Naive thymus-derived CD4-positive, alpha-beta T cell (primary cell): ENCODE measurements at regions of chr2 and their contacts with region 1.

Region 1: GRCh38 chr2:102442967-102443828 is 20.2 kb downstream of the IL18RAP start:
- DNase-seq: peak in 7 of 9 donors; percentile 16 to 58 (median 49)
- ATAC-seq: peak; percentile 89
- H3K4me3 ChIP-seq: no peak overlapping the region
- H3K4me3 Mint-ChIP-seq: peak overlapping the region in 6 of 10 donors; percentile 24 to 71 (median 36)
- H3K27ac ChIP-seq: no peak overlapping the region
- H3K27ac Mint-ChIP-seq: peak overlapping the region in 4 of 9 donors; percentile 19 to 46 (median 30)
- H3K4me1 ChIP-seq: peaks cover 0 to 5% of the 10 kb centered on the region in 2 donors
- H3K4me1 Mint-ChIP-seq: peaks cover 0 to 12% (median 7%) of the 10 kb centered on the region in 7 donors
- H3K27me3 ChIP-seq: no peaks in the 10 kb centered on the region
- H3K27me3 Mint-ChIP-seq: no peaks in the 10 kb centered on the region

Region 2: GRCh38 chr2:101341901-101342624 is 1101.1 kb before region 1 on chr2:
- CTCF ChIA-PET with region 1: no interaction called
- POLR2A ChIA-PET with region 1: no interaction called
- intact Hi-C with region 1: loop called in 1 of 2 experiments (anchors 10 kb)
- DNase-seq: peak; percentile 32 to 73 (median 51)
- ATAC-seq: peak; percentile 76
- H3K4me3 ChIP-seq: no peak overlapping the region
- H3K4me3 Mint-ChIP-seq: peak overlapping the region in 4 of 10 donors; percentile 10 to 63 (median 18)
- H3K27ac ChIP-seq: no peak overlapping the region
- H3K27ac Mint-ChIP-seq: peak overlapping the region in 5 of 9 donors; percentile 9 to 68 (median 31)
- H3K4me1 ChIP-seq: peaks cover 6 to 21% of the 10 kb centered on the region in 2 donors
- H3K4me1 Mint-ChIP-seq: peaks cover 24 to 43% (median 32%) of the 10 kb centered on the region in 7 donors
- H3K27me3 ChIP-seq: no peaks in the 10 kb centered on the region
- H3K27me3 Mint-ChIP-seq: peaks cover 0 to 20% (median 0%) of the 10 kb centered on the region in 5 donors

Region 3: DNA sequence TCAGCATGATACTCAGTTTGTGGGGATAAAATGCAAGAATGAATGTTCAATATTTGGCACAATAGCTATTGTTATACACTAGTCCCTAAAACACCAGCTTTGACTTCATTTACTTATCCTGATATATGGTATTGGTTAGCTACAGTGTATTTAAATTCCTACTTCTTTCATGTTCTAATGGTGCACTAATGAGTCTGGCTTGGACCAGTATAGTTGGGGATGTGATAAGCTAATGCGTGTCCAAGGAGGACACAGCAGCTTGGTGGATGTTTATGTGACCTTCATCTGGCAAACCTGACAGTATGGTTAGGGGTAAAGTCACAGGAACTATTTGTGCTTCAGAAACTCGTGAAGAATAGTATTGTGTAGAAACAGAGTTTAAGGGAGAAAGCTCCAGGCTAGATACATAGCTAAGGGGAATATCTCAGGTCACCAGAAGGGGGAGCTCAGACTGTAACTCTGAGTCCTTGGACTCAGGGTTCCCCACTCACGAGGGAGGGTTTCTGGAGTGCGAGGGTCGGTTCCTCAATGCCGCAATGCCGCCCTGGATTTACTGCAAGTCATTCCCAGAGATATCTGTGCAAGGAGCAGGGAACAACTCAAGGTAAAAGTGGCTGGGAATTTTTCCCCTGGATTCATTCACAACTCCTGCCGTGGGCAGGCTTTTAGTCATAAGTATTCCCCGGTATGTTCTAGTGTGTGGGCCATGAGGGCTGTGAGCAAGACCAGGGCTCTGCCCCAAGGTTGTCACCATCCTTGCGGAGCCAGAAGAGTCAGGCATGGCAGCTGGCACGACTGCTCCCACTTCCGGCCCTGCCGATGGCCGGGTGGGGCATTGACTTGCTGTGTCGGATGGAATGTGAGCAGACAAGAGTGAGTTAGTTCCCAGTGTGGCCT is 437.0 kb before region 1 on chr2:
- CTCF ChIA-PET with region 1: interaction called, 3 read pairs
- POLR2A ChIA-PET with region 1: interaction called, 3 read pairs
- intact Hi-C with region 1: loop called in 1 of 2 experiments (anchors 1 kb)
- DNase-seq: peak in 3 of 9 donors; percentile 23 to 28 (median 24)
- ATAC-seq: peak; percentile 71
- H3K4me3 ChIP-seq: no peak overlapping the region
- H3K4me3 Mint-ChIP-seq: no peak overlapping the region
- H3K27ac ChIP-seq: no peak overlapping the region
- H3K27ac Mint-ChIP-seq: no peak overlapping the region
- H3K4me1 ChIP-seq: peaks cover 0 to 12% of the 10 kb centered on the region in 2 donors
- H3K4me1 Mint-ChIP-seq: peaks cover 0 to 9% (median 0%) of the 10 kb centered on the region in 7 donors
- H3K27me3 ChIP-seq: no peaks in the 10 kb centered on the region
- H3K27me3 Mint-ChIP-seq: peaks cover 0 to 16% (median 10%) of the 10 kb centered on the region in 5 donors

Region 4: DNA sequence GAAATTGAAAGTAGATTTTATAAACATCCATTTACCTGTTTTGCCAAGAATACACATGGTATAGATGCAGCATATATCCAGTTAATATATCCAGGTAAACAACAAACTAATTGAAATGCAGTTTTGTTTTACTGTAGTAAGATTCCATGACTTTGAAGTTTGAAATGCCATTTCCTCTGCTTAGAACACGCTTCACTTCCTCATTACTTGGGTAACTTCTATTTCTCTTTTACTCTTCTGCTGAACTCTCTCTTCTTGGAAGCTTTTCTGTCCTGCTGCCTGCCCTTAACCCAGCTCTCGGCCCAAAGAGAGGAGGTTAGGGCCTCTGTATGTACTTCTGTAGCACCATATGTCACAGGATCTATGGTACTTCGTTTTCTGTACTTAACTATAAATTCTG is 270.5 kb before region 1 on chr2:
- CTCF ChIA-PET with region 1: no interaction called
- POLR2A ChIA-PET with region 1: no interaction called
- intact Hi-C with region 1: no loop called
- DNase-seq: peak in 1 of 9 donors; percentile 1
- ATAC-seq: peak; percentile 27
- H3K4me3 ChIP-seq: no peak overlapping the region
- H3K4me3 Mint-ChIP-seq: peak overlapping the region in 5 of 10 donors; percentile 1 to 53 (median 39)
- H3K27ac ChIP-seq: no peak overlapping the region
- H3K27ac Mint-ChIP-seq: peak overlapping the region in 5 of 9 donors; percentile 2 to 77 (median 42)
- H3K4me1 ChIP-seq: no peaks in the 10 kb centered on the region
- H3K4me1 Mint-ChIP-seq: peaks cover 4 to 11% (median 10%) of the 10 kb centered on the region in 7 donors
- H3K27me3 ChIP-seq: no peaks in the 10 kb centered on the region
- H3K27me3 Mint-ChIP-seq: peaks cover 0 to 5% (median 1%) of the 10 kb centered on the region in 5 donors

Region 5: GRCh38 chr2:102240640-102241370 is 202.4 kb before region 1 on chr2:
- CTCF ChIA-PET with region 1: interaction called, 32 read pairs
- POLR2A ChIA-PET with region 1: no interaction called
- intact Hi-C with region 1: loop called (anchors 1 kb)
- DNase-seq: peak; percentile 55 to 88 (median 80)
- ATAC-seq: peak; percentile 95
- H3K4me3 ChIP-seq: no peak overlapping the region
- H3K4me3 Mint-ChIP-seq: peak overlapping the region in 5 of 10 donors; percentile 12 to 41 (median 18)
- H3K27ac ChIP-seq: no peak overlapping the region
- H3K27ac Mint-ChIP-seq: peak overlapping the region in 5 of 9 donors; percentile 25 to 72 (median 56)
- H3K4me1 ChIP-seq: peaks cover 7 to 10% of the 10 kb centered on the region in 2 donors
- H3K4me1 Mint-ChIP-seq: peaks cover 6 to 31% (median 9%) of the 10 kb centered on the region in 7 donors
- H3K27me3 ChIP-seq: peaks cover 0 to 3% of the 10 kb centered on the region in 2 donors
- H3K27me3 Mint-ChIP-seq: peaks cover 0 to 2% (median 0%) of the 10 kb centered on the region in 5 donors

Region 6: GRCh38 chr2:102301867-102302362 is 141.3 kb before region 1 on chr2:
- CTCF ChIA-PET with region 1: interaction called, 22 read pairs
- POLR2A ChIA-PET with region 1: no interaction called
- intact Hi-C with region 1: loop called (anchors 1 to 2 kb)
- DNase-seq: peak in 8 of 9 donors; percentile 7 to 47 (median 32)
- ATAC-seq: peak; percentile 94
- H3K4me3 ChIP-seq: no peak overlapping the region
- H3K4me3 Mint-ChIP-seq: peak overlapping the region in 4 of 10 donors; percentile 6 to 63 (median 34)
- H3K27ac ChIP-seq: no peak overlapping the region
- H3K27ac Mint-ChIP-seq: peak overlapping the region in 1 of 9 donors; percentile 54
- H3K4me1 ChIP-seq: peaks cover 0 to 6% of the 10 kb centered on the region in 2 donors
- H3K4me1 Mint-ChIP-seq: peaks cover 10 to 53% (median 18%) of the 10 kb centered on the region in 7 donors
- H3K27me3 ChIP-seq: no peaks in the 10 kb centered on the region
- H3K27me3 Mint-ChIP-seq: peaks cover 0 to 25% (median 8%) of the 10 kb centered on the region in 5 donors

Region 7: DNA sequence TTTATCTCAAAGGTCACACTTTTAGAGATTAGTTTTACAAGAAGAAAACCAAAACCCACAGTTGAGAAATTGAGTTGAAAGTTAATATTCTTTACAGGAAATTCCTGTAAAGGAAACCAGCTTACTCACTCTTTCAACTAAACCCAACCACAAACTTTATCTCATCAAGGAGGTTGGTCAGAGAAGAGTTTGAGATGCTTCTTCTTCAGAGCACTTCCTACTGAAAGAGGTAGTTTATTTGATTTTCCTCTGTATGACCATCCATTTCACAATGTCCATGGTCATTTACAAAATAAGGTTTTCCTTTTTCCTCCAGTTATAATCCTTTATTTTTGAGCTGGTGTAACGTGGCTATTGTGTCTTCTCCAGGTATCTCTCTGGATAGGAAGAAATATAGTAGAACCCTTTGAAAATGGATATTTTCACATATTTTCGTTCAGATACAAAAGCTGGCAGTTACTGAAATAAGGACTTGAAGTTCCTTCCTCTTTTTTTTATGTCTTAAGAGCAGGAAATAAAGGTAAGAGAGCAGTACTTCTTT is 24.7 kb before region 1 on chr2:
- CTCF ChIA-PET with region 1: interaction called, 3 read pairs
- POLR2A ChIA-PET with region 1: no interaction called
- intact Hi-C with region 1: loop called (anchors 1 to 2 kb)
- DNase-seq: peak in 6 of 9 donors; percentile 24 to 59 (median 49)
- ATAC-seq: peak; percentile 85
- H3K4me3 ChIP-seq: peak overlapping the region; percentile 18
- H3K4me3 Mint-ChIP-seq: peak overlapping the region; percentile 38 to 87 (median 74)
- H3K27ac ChIP-seq: no peak overlapping the region
- H3K27ac Mint-ChIP-seq: peak overlapping the region in 7 of 9 donors; percentile 64 to 95 (median 78)
- H3K4me1 ChIP-seq: peaks cover 29 to 49% of the 10 kb centered on the region in 2 donors
- H3K4me1 Mint-ChIP-seq: peaks cover 27 to 67% (median 48%) of the 10 kb centered on the region in 7 donors
- H3K27me3 ChIP-seq: no peaks in the 10 kb centered on the region
- H3K27me3 Mint-ChIP-seq: no peaks in the 10 kb centered on the region

Region 8: DNA sequence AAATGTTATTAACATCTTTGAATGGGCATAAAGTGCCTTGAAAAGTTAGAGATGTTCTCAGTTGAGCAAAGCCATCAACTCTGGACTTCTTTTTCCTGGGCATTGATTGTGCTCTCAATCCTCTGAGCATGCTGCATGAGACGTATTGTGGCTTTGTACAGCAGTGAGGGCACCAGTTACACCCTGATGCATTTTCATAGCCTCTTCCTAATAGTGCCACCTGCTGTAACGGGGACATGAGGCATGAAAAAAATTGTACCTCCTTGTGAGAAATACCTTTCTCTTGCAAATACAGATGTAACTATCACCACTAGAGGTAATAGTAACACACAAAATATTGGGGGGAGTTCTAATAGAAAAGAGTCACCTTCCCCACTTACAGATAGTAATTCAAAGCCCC is 1016.1 kb after region 1 on chr2:
- CTCF ChIA-PET with region 1: no interaction called
- POLR2A ChIA-PET with region 1: no interaction called
- intact Hi-C with region 1: no loop called
- DNase-seq: no peak
- ATAC-seq: no peak
- H3K4me3 ChIP-seq: no peak overlapping the region
- H3K4me3 Mint-ChIP-seq: no peak overlapping the region
- H3K27ac ChIP-seq: no peak overlapping the region
- H3K27ac Mint-ChIP-seq: no peak overlapping the region
- H3K4me1 ChIP-seq: no peaks in the 10 kb centered on the region
- H3K4me1 Mint-ChIP-seq: no peaks in the 10 kb centered on the region
- H3K27me3 ChIP-seq: no peaks in the 10 kb centered on the region
- H3K27me3 Mint-ChIP-seq: no peaks in the 10 kb centered on the region